Body of pancreas (tissue), 4 donors: ENCODE measurements at regions of chr3 and their contacts with region 1.

Region 1: DNA sequence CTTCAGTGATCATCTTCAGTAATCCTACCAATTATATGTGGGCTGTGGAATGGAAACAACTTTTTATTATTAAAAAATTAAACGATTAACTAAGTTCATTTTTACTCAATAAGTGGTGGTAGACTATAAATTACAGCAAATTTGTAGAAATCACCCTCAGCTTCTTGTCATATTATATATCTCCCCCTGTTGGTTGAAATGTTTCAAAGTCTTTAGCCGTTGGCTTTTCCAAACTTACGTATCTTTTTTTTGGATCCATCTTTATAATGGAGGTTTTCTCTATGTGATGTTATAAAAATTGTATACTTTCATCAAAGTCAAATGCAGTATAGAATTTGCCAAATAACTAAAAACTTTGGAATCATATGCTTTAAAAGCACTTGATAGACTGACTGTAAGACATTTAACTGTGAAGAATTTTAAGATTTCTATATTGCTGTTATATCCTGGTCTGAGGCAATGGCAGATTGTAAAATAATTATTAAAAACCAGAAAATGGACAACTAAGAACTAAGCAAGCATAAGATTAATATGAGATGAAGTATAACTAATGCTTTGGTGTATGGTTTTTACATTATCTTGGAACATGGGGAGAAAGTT is 44.7 kb downstream of the ATP11B start:
- DNase-seq: no peak
- ATAC-seq: no peak
- H3K4me3 ChIP-seq: no peak overlapping the region
- H3K27ac ChIP-seq: no peak overlapping the region
- H3K4me1 ChIP-seq: no peaks in the 10 kb centered on the region
- H3K27me3 ChIP-seq: no peaks in the 10 kb centered on the region
- CTCF ChIP-seq: peak in 6 of 7 experiments; percentile 31 to 59 (median 48)
- POLR2A ChIP-seq: no peak

Region 2: GRCh38 chr3:182713743-182714517 is 124.0 kb before region 1 on chr3:
- intact Hi-C with region 1: loop called (anchors 10 kb)
- DNase-seq: peak in 1 of 4 donors; percentile 37
- ATAC-seq: peak; percentile 84
- H3K4me3 ChIP-seq: no peak overlapping the region
- H3K27ac ChIP-seq: no peak overlapping the region
- H3K4me1 ChIP-seq: peaks cover 24% of the 10 kb centered on the region
- H3K27me3 ChIP-seq: no peaks in the 10 kb centered on the region
- CTCF ChIP-seq: peak; percentile 9 to 91 (median 77)
- POLR2A ChIP-seq: no peak

Region 3: GRCh38 chr3:182746959-182747358 is 91.0 kb before region 1 on chr3:
- intact Hi-C with region 1: no loop called
- DNase-seq: no peak
- ATAC-seq: no peak
- H3K4me3 ChIP-seq: no peak overlapping the region
- H3K27ac ChIP-seq: no peak overlapping the region
- H3K4me1 ChIP-seq: no peaks in the 10 kb centered on the region
- H3K27me3 ChIP-seq: no peaks in the 10 kb centered on the region
- CTCF ChIP-seq: no peak
- POLR2A ChIP-seq: no peak

Region 4: DNA sequence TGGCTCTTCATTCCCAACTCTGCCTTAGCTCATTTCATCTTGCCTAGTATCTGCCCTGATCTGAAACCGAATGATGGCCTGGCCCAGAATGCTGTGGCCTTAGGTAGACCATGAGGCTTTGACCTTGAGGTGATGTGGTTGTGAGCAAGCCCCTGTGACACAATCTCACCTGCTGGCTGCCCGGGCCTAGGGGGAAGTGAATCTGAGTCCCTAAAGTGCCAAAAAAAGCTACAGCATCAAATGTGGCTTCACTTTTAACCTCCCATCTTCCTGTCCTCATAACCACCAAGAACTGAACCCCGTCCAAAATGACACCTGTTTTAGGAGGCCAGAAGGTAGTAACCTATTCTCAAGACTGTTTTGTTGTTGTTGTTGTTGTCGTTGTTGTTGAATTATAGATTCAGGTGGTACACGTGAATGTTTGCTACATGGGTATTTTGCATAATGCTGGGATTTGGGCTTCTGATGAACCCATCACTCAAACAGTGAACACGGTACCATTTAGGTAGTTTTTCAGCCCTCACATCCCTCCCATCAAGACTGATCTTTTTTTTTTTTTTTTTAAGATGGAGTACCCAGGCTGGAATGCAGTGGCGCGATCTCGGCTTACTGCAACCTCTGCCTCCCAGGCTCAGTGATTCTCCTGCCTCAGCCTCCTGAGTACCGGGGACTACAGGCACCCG is 206.7 kb after region 1 on chr3:
- intact Hi-C with region 1: no loop called
- DNase-seq: no peak
- ATAC-seq: no peak
- H3K4me3 ChIP-seq: no peak overlapping the region
- H3K27ac ChIP-seq: no peak overlapping the region
- H3K4me1 ChIP-seq: peaks cover 24% of the 10 kb centered on the region
- H3K27me3 ChIP-seq: no peaks in the 10 kb centered on the region
- CTCF ChIP-seq: no peak
- POLR2A ChIP-seq: no peak